WTC11 (cell line): ENCODE measurements at regions of chr11 and their contacts with region 1.

Region 1: GRCh38 chr11:128157423-128158298 is 429.7 kb downstream of the ETS1 start:
- DNase-seq: peak; percentile 47
- ATAC-seq: peak; percentile 87
- H3K4me3 Mint-ChIP-seq: peak overlapping the region; percentile 49
- H3K27ac Mint-ChIP-seq: no peak overlapping the region
- H3K4me1 Mint-ChIP-seq: no peaks in the 10 kb centered on the region
- H3K27me3 Mint-ChIP-seq: no peaks in the 10 kb centered on the region; the same call in 1 of the 2 replicates
- CTCF ChIP-seq: peak; percentile 89

Region 2: GRCh38 chr11:127639916-127640315 is 517.7 kb before region 1 on chr11:
- CTCF ChIA-PET with region 1: no interaction called
- POLR2A ChIA-PET with region 1: no interaction called
- DNase-seq: no peak
- ATAC-seq: no peak
- H3K4me3 Mint-ChIP-seq: no peak overlapping the region
- H3K27ac Mint-ChIP-seq: no peak overlapping the region
- H3K4me1 Mint-ChIP-seq: peaks cover 26% of the 10 kb centered on the region
- H3K27me3 Mint-ChIP-seq: no peaks in the 10 kb centered on the region
- CTCF ChIP-seq: no peak

Region 3: GRCh38 chr11:128021349-128022006 is 136.2 kb before region 1 on chr11:
- CTCF ChIA-PET with region 1: no interaction called
- POLR2A ChIA-PET with region 1: no interaction called
- DNase-seq: peak; percentile 40
- ATAC-seq: peak; percentile 93
- H3K4me3 Mint-ChIP-seq: no peak overlapping the region
- H3K27ac Mint-ChIP-seq: no peak overlapping the region
- H3K4me1 Mint-ChIP-seq: no peaks in the 10 kb centered on the region
- H3K27me3 Mint-ChIP-seq: no peaks in the 10 kb centered on the region
- CTCF ChIP-seq: 0 out of 2 replicates have a peak, but pooled peaks have one; percentile 35

Region 4: DNA sequence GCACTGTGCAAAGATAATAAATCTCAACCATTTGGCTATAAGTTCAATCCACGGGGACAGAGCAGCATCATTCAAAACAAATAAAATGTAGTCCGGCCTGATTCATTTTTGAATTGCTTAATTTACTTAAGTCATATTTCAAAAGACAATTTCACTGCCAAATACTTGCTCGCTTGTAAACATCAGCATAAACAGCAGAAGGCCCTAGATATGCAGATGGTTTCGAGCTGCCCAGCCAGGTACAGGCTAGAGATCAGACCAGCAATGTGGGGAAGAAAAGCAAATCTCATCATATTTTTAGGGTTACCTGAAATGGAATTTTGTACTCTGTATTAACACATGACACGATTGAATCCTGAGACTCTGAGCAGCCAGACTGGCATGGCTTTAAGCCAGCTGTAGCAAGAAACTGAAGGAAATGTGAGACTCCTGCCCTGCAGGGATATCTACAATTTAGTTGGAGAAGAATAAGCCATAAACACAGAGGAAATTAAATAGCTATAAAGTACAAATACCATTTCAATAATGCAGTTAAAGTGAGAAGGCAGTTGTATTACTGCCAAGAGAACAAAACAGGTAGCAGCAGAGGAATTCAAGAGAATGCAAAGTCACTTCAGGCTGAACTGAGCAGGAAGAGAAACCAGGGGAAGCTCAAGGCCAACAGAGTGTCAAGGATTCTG is 10.6 kb before region 1 on chr11:
- CTCF ChIA-PET with region 1: interaction called, 23 read pairs
- POLR2A ChIA-PET with region 1: no interaction called
- DNase-seq: no peak
- ATAC-seq: peak; percentile 43; the same call in 1 of the 2 replicates
- H3K4me3 Mint-ChIP-seq: no peak overlapping the region
- H3K27ac Mint-ChIP-seq: no peak overlapping the region
- H3K4me1 Mint-ChIP-seq: peaks cover 6% of the 10 kb centered on the region
- H3K27me3 Mint-ChIP-seq: no peaks in the 10 kb centered on the region
- CTCF ChIP-seq: no peak

Region 5: DNA sequence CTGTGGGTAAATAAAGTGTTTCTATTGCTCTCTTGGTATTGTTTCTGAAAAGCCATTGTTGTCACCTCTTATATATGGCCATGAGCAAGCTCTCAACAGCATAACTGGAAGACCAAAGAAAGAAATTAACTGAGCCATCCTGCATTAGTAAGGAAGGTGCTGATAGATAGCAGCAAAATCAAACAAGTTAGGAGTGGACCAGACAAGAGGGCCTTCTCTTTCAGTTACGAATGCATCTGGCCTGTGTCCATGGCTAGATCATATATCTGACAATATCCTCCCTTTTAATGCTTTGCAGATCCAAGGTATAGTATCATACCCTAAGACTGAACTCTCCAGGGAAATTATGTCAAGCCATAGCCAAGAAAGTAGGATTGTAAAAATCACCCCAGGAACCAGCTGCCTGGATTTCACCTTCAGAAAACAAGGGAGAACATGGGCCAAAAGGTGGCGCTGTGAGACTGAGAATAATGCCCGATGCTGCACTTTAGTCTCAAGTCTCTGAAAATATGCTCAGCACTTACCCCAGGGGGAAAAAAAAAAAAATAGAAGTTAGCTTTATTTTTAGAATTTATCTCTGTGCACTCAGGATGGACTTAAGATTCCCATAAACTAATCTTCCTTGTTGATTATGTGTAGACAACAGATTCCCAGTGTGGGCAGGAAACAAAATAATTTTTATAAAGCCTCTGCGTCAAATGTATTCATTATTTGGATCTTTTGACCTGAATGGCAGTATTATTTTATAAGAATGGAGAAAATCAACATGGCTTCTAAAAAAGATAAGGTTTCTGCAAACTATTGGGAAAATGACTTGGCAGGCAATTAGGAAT is 14.6 kb after region 1 on chr11:
- CTCF ChIA-PET with region 1: interaction called, 66 read pairs
- POLR2A ChIA-PET with region 1: interaction called, 3 read pairs
- DNase-seq: peak; percentile 84
- ATAC-seq: peak; percentile 73
- H3K4me3 Mint-ChIP-seq: no peak overlapping the region
- H3K27ac Mint-ChIP-seq: no peak overlapping the region
- H3K4me1 Mint-ChIP-seq: peaks cover 15% of the 10 kb centered on the region
- H3K27me3 Mint-ChIP-seq: no peaks in the 10 kb centered on the region
- CTCF ChIP-seq: peak; percentile 77

Region 6: GRCh38 chr11:128198216-128198772 is 40.6 kb after region 1 on chr11:
- CTCF ChIA-PET with region 1: no interaction called
- POLR2A ChIA-PET with region 1: no interaction called
- DNase-seq: no peak
- ATAC-seq: no peak
- H3K4me3 Mint-ChIP-seq: no peak overlapping the region
- H3K27ac Mint-ChIP-seq: no peak overlapping the region
- H3K4me1 Mint-ChIP-seq: no peaks in the 10 kb centered on the region
- H3K27me3 Mint-ChIP-seq: no peaks in the 10 kb centered on the region
- CTCF ChIP-seq: no peak

Region 7: DNA sequence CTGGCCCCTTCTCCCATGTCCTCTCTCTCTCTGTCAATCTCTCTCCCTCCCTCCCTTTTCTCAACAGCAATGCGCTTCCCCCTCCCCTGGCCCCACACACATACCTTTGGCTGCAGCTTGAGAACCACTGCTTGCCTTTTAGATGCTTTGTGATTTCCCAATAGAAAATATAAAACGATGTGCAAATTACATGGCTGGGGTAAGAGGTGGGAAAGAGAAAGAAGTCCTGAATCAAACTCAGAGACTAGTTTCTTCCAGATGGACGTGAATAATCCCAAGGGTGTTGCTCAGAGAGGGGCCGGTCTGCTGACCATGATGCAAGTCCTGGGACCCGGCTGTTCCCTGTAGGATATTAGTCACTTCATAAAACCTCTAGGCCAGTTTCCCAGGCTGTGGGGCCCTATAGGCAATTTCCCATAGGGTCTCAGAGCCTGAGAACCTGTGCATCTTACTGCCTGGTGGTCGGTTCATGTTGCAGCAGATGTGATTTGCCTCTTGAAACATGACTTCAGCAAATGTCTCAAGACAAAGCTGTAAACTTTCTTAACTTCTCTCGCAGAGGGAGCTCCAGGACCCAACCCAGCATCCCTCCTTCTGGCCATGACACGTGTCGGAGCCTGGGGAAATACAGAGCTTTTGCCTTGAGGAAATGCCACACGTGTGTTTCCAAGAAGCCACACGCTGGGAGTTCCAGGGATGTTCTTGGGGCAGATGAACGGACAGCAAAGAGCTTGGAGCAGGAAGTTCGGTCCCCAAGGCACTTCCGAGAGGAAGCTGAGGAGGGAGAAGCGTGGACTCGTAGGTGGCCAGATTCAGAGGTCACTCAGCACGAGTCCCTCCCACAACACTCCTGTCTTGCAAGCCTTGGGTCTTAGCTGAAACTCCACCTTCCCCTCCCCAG is 464.2 kb after region 1 on chr11:
- CTCF ChIA-PET with region 1: interaction called, 10 read pairs
- POLR2A ChIA-PET with region 1: no interaction called
- DNase-seq: no peak
- ATAC-seq: no peak; the same call in 1 of the 2 replicates
- H3K4me3 Mint-ChIP-seq: no peak overlapping the region
- H3K27ac Mint-ChIP-seq: no peak overlapping the region
- H3K4me1 Mint-ChIP-seq: peaks cover 37% of the 10 kb centered on the region
- H3K27me3 Mint-ChIP-seq: peaks cover 36% of the 10 kb centered on the region
- CTCF ChIP-seq: no peak